CD4-positive, alpha-beta T cell (primary cell): ENCODE measurements at regions of chr1 and their contacts with region 1.

Region 1: DNA sequence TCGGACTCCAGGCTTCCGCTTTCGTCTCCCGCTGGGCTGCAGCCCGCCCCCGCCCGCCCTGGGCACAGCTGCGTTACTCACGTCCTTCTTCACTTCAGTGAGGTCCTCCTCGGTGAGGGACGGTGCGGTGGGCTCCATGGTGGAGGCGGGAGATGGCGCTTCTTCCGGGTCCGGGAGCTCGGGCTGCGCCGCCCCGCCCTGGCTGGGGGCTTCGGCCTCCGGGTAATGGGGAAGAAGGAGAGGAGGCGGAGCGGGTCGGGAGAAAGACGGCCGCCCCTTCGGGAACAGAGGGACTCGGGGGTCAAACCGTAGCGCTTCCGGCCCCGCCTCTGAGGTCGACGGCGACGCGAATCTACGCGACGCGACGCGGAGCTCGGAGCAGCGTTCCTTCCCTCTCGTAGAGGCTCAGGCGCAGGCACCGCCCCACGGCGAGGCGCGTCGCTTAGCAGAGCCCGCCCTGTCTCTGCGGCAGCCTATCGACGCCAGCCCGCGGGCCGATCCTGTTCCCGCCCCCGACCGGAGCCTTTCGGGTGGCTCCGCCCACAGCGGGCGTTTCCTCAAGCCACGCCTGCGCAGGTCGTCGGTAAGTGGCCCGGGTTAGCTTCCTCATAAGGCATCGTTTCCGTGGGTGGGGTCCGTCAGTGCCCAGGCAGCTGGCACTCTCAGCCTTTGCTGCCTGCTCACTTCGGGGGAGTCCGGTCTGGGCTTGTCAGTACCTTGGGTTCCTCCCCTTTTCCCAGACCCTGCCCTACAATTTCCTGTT is at the start of gene BCL10:
- DNase-seq: peak; percentile 93 to 99 (median 96)
- ATAC-seq: peak; percentile 95
- H3K4me3 ChIP-seq: peak within 1 kb of the TSS; percentile 94
- H3K4me3 Mint-ChIP-seq: peak within 1 kb of the TSS; percentile 92
- H3K27ac ChIP-seq: peak within 1 kb of the TSS; percentile 90 to 99
- H3K27ac Mint-ChIP-seq: peak within 1 kb of the TSS; percentile 95
- H3K4me1 ChIP-seq: peaks cover 28% of the 10 kb centered on the region
- H3K4me1 Mint-ChIP-seq: peaks cover 57% of the 10 kb centered on the region
- H3K27me3 ChIP-seq: no peaks in the 10 kb centered on the region
- H3K27me3 Mint-ChIP-seq: no peaks in the 10 kb centered on the region
- CTCF ChIP-seq: no peak
- total RNA-seq, gene BCL10: 50.0 to 52.0 TPM

Region 2: DNA sequence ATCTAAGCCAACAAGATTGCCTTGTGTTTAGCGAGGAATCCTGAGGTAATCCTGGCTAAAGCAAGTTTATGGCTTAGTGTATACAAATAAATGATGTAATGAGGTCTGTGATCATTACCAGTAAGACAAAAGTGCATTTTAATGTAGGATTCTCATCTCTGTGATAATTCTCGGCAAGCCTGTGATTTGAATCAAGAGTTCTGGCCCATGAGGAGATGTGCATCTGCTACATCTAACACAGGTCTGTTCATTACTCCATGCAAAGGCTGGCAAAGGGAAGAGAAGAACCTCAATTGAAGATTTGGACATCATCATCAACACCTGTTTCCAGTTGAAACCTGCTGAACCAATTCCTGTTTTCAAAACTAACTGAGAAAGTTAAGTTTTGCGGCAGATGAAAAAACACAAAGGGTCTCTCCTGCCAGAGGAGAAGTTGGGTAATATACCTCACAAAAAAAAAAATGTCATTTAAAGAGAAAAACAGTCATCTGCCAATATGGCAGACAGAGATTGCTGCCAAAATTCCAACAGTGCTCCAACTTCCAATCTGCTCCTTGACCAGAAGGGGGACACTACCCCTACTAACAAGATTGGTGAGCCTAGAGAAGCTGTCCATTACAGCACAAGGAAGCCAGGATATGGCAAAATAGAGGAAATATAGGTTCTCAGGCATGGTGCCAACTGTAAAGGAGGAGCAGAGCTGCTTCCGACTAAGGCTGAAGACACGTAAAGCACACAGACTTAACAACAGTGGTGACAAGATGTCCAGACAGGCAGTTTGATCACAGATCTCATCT is 1731.1 kb before region 1 on chr1:
- CTCF ChIA-PET with region 1: no interaction called
- POLR2A ChIA-PET with region 1: no interaction called
- intact Hi-C with region 1: no loop called
- DNase-seq: no peak
- ATAC-seq: no peak
- H3K4me3 ChIP-seq: no peak overlapping the region
- H3K4me3 Mint-ChIP-seq: no peak overlapping the region
- H3K27ac ChIP-seq: no peak overlapping the region
- H3K27ac Mint-ChIP-seq: no peak overlapping the region
- H3K4me1 ChIP-seq: no peaks in the 10 kb centered on the region
- H3K4me1 Mint-ChIP-seq: no peaks in the 10 kb centered on the region
- H3K27me3 ChIP-seq: no peaks in the 10 kb centered on the region
- H3K27me3 Mint-ChIP-seq: no peaks in the 10 kb centered on the region
- CTCF ChIP-seq: no peak

Region 3: GRCh38 chr1:85061711-85062424 is 214.5 kb before region 1 on chr1:
- CTCF ChIA-PET with region 1: no interaction called
- POLR2A ChIA-PET with region 1: no interaction called
- intact Hi-C with region 1: loop called in 1 of 2 experiments (anchors 5 kb)
- DNase-seq: peak; percentile 69 to 95 (median 73)
- ATAC-seq: peak; percentile 99
- H3K4me3 ChIP-seq: peak overlapping the region; percentile 50
- H3K4me3 Mint-ChIP-seq: peak overlapping the region; percentile 89
- H3K27ac ChIP-seq: no peak overlapping the region
- H3K27ac Mint-ChIP-seq: peak overlapping the region; percentile 43
- H3K4me1 ChIP-seq: peaks cover 10% of the 10 kb centered on the region
- H3K4me1 Mint-ChIP-seq: peaks cover 10% of the 10 kb centered on the region
- H3K27me3 ChIP-seq: peaks cover 0 to 3% of the 10 kb centered on the region in 2 experiments
- H3K27me3 Mint-ChIP-seq: peaks cover 28% of the 10 kb centered on the region
- CTCF ChIP-seq: no peak

Region 4: DNA sequence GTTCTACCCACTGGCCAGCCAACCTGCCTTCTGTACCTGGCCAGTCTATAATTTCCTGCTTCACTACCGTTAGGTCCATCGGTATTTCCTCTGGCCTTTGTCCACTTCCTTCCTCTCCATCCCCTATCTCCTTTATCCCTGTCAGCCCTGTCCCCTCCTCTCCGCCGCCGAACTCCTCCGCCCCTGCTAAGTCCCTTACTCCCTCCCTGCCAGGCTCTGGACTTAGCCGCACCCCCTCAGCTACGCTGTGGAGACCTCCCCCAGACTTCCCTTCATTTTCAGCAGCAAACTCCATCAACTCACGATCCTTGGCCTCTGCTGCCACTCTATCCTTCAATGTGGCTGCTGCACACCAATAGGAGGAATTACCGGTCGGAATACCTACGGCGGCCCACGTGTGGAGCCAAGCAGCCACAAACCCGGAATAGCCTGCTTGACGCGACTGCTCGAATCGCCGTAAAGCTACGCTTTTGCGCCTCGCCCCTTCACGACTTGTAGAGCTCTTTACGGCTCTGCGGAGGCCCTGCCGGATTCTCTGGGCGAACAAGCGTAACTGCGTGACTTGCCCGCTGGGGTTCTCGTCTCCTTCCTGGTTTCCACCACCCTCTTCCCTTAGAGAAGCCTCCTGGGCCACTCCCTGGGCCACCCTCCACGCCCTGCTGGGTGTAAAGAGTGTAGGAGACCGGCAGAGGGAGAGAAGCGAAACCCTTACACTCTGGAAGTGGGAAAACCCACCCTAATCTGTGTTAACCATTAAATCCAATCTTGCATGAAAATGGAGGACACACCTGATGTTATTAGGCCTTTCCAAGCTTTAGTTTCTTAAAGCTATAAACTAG is 431.8 kb after region 1 on chr1 and contains the start of gene ZNHIT6:
- CTCF ChIA-PET with region 1: no interaction called
- POLR2A ChIA-PET with region 1: interaction called, 17 read pairs
- intact Hi-C with region 1: loop called in 1 of 2 experiments (anchors 10 kb)
- DNase-seq: peak; percentile 72 to 96 (median 80)
- ATAC-seq: peak; percentile 96
- H3K4me3 ChIP-seq: peak within 1 kb of the TSS; percentile 89
- H3K4me3 Mint-ChIP-seq: no peak within 1 kb of the TSS
- H3K27ac ChIP-seq: peak within 1 kb of the TSS; percentile 46 to 49
- H3K27ac Mint-ChIP-seq: no peak within 1 kb of the TSS
- H3K4me1 ChIP-seq: peaks cover 24% of the 10 kb centered on the region
- H3K4me1 Mint-ChIP-seq: peaks cover 29% of the 10 kb centered on the region
- H3K27me3 ChIP-seq: no peaks in the 10 kb centered on the region
- H3K27me3 Mint-ChIP-seq: no peaks in the 10 kb centered on the region
- CTCF ChIP-seq: no peak
- total RNA-seq, gene ZNHIT6: 10.4 to 10.8 TPM